HCT116 (cell line): ENCODE measurements at regions of chr1 and their contacts with region 1.

Region 1: DNA sequence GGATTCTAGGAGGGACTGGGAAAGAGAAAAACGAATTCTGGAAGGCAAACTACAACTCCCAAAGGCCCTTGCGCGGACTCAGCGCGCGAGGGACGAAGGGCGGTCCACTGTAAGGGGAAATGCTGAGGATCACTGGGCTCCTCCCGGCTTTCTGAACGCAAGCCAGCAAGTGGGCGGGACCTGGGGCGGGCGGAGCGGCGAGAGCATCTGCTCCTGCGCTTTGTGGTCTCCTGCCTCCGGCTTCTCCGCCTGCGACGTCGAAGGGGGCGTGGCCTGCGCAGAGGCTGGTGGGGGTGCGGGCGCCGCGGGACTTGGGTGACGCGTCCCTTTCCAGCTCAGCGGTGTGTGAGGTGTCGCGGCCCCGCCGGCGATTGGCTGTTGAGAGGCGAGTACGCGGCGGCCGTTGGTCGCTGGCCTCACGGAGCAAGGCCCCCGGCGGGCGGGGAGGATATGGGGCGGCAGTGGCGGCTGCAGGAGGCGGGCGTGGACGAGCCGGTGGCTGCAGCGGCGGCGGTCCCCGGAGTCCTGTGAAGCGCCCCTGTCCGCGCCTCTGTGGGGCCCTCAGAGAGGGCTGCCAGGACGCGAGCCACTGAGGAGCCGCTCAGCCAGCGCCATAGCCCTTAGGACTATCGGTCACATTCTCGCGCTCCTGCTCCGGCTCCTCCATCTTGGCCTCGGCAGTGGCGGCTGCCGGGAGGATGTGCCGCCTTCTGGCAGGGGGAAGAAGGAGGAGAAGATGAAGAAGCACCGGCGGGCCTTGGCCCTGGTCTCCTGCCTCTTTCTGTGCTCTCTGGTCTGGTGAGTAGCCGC is at the start of gene SUCO:
- DNase-seq: peak; percentile 97
- ATAC-seq: peak; percentile 90
- H3K4me3 ChIP-seq: peak within 1 kb of the TSS; percentile 90
- H3K27ac ChIP-seq: peak within 1 kb of the TSS; percentile 77
- H3K4me1 ChIP-seq: peaks cover 0 to 18% of the 10 kb centered on the region in 2 experiments; a peak in 3 of 4 replicates
- H3K27me3 ChIP-seq: no peaks in the 10 kb centered on the region
- CTCF ChIP-seq: no peak
- POLR2A ChIP-seq: no peak
- RAD21 ChIP-seq: no peak
- total RNA-seq, gene SUCO: 22.6 TPM

Region 2: DNA sequence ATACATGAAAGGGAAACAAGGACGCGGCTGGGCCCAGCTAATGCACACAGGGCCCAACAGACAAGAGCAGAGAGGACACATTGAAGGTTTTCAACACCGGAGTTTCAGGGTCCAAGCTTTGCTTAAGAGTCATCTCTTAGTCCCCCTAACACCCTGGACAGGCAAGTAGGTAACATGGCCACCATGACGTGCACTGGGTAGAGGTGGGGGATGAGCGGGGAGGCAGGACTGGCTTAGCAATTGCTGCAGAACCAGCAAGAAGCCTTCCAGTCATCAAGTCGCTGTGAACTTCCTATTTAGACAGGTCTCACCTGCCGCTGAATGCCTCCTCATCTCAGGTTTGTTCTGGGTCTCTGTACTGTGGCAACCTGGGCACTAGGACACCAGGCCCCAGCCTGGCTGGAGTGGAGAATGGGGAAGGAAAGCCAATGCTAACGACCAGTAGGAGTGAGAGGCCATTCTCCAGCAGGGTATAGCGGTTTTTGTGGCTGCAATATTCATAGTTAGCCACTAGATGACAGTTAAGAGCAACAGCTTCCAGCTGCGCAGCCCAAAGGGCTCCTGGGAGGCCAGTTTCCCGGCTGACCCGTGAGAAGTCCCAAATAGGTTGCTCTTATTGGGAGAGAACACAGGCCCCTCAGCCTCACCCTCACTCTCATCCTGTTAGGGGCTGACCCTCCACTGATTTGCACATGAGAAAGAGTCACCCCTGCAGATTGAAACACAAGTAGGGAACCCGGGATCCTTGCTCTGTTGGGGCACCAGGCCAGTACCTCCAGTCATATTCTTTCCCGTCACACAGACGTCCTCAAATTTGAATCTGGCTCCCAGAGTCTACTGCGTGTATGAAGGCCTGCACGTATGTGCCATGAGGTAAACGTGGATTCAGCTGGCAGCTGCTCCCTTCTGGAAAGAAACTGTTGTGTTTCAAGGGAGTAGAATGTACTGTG is 83.0 kb before region 1 on chr1:
- CTCF ChIA-PET with region 1: no interaction called
- POLR2A ChIA-PET with region 1: no interaction called
- RAD21 ChIA-PET with region 1: no interaction called
- intact Hi-C with region 1: loop called (anchors 2 kb)
- DNase-seq: peak; percentile 39
- ATAC-seq: peak; percentile 97
- H3K4me3 ChIP-seq: no peak overlapping the region
- H3K27ac ChIP-seq: no peak overlapping the region
- H3K4me1 ChIP-seq: peaks cover 0 to 20% of the 10 kb centered on the region in 2 experiments; a peak in 2 of 4 replicates
- H3K27me3 ChIP-seq: no peaks in the 10 kb centered on the region
- CTCF ChIP-seq: peak; percentile 83 to 88 (median 86)
- POLR2A ChIP-seq: no peak
- RAD21 ChIP-seq: peak; percentile 94